ENCODE measurements at regions of chr13 and their contacts with region 1.

Region 1: GRCh38 chr13:20703780-20704445 is 414 bp downstream of the IL17D start:
- DNase-seq: peak; percentile 78 to 83 (median 81)
- H3K4me3 ChIP-seq: no peak overlapping the region
- H3K4me3 Mint-ChIP-seq: no peak overlapping the region
- H3K27ac ChIP-seq: no peak overlapping the region
- H3K27ac Mint-ChIP-seq: no peak overlapping the region
- H3K4me1 ChIP-seq: peaks cover 7% of the 10 kb centered on the region
- H3K4me1 Mint-ChIP-seq: peaks cover 3 to 14% (median 8%) of the 10 kb centered on the region in 4 donors
- H3K27me3 ChIP-seq: peaks cover 30% of the 10 kb centered on the region
- H3K27me3 Mint-ChIP-seq: peaks cover 11 to 22% of the 10 kb centered on the region in 2 donors

Region 2: GRCh38 chr13:20566898-20567874 is 136.7 kb before region 1 on chr13 and contains the start of gene IFT88:
- CTCF ChIA-PET with region 1: interaction called, 4 read pairs
- POLR2A ChIA-PET with region 1: interaction called, 4 read pairs
- intact Hi-C with region 1: loop called (anchors 1 kb)
- DNase-seq: peak; percentile 78 to 86 (median 80)
- H3K4me3 ChIP-seq: peak within 1 kb of the TSS; percentile 56 to 61
- H3K4me3 Mint-ChIP-seq: peak within 1 kb of the TSS; percentile 92 to 95 (median 94)
- H3K27ac ChIP-seq: peak within 1 kb of the TSS; percentile 53
- H3K27ac Mint-ChIP-seq: peak within 1 kb of the TSS; percentile 92 to 96 (median 92)
- H3K4me1 ChIP-seq: peaks cover 16% of the 10 kb centered on the region
- H3K4me1 Mint-ChIP-seq: peaks cover 10 to 19% (median 14%) of the 10 kb centered on the region in 4 donors
- H3K27me3 ChIP-seq: no peaks in the 10 kb centered on the region
- H3K27me3 Mint-ChIP-seq: no peaks in the 10 kb centered on the region
- total RNA-seq, gene IFT88: 8.3 to 9.8 TPM

Region 3: GRCh38 chr13:20754009-20754408 is 50.1 kb after region 1 on chr13:
- CTCF ChIA-PET with region 1: no interaction called
- POLR2A ChIA-PET with region 1: no interaction called
- intact Hi-C with region 1: no loop called
- DNase-seq: no peak
- H3K4me3 ChIP-seq: no peak overlapping the region
- H3K4me3 Mint-ChIP-seq: no peak overlapping the region
- H3K27ac ChIP-seq: no peak overlapping the region
- H3K27ac Mint-ChIP-seq: no peak overlapping the region
- H3K4me1 ChIP-seq: no peaks in the 10 kb centered on the region
- H3K4me1 Mint-ChIP-seq: no peaks in the 10 kb centered on the region
- H3K27me3 ChIP-seq: no peaks in the 10 kb centered on the region
- H3K27me3 Mint-ChIP-seq: peaks cover 0 to 2% of the 10 kb centered on the region in 2 donors